OCI-LY7 (cell line): ENCODE measurements at regions of chr11 and their contacts with region 1.

Region 1: GRCh38 chr11:68038718-68039525 is at the start of gene TCIRG1:
- DNase-seq: peak; percentile 77
- H3K4me3 ChIP-seq: peak within 1 kb of the TSS; percentile 79
- H3K27ac ChIP-seq: peak within 1 kb of the TSS; percentile 79
- H3K4me1 ChIP-seq: peaks cover 30% of the 10 kb centered on the region
- CTCF ChIP-seq: no peak
- total RNA-seq, gene TCIRG1: 148 and 199 TPM in 2 replicates

Region 2: GRCh38 chr11:68003846-68004550 is 34.9 kb before region 1 on chr11 and contains the start of gene UNC93B1:
- CTCF ChIA-PET with region 1: no interaction called
- POLR2A ChIA-PET with region 1: no interaction called
- intact Hi-C with region 1: loop called (anchors 1 kb)
- DNase-seq: peak; percentile 90
- H3K4me3 ChIP-seq: peak within 1 kb of the TSS; percentile 82
- H3K27ac ChIP-seq: peak within 1 kb of the TSS; percentile 89
- H3K4me1 ChIP-seq: peaks cover 57% of the 10 kb centered on the region
- CTCF ChIP-seq: no peak
- total RNA-seq, gene UNC93B1: 39.6 and 44.0 TPM in 2 replicates

Region 3: DNA sequence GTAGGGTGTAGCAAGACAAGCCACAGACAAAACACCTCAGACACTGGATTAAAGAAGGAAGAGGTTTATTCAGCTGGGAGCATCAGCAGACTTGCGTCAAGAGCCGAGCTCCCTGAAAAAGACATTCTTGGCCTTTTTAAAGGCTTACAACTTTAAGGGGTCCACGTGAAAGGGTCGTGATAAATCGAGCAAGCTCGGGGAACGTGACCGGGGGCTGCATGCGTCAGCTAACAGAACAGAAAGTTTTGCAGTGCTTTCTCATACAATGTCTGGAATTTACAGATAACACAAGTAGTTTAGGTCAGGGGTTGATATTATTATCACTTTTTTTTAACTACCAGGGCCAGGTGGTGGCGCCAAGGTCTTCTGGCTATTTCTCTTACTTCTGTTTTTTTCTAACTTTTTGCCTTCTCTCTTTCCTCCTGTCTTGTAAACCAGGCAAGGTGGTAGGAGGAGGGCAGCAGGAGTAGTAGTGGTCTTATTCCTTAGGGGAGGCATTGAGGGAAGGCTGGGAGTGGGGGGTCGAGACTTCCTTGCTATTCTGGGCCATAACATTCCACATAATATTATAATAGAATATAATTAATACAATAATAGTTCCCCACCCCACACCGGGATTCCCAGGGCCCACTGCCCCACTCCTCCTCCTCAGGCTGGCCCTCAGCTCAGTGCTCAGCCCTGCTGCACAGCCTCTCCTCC is 29.4 kb before region 1 on chr11:
- CTCF ChIA-PET with region 1: interaction called, 5 read pairs
- POLR2A ChIA-PET with region 1: no interaction called
- intact Hi-C with region 1: loop called (anchors 1 kb)
- DNase-seq: peak; percentile 68
- H3K4me3 ChIP-seq: peak overlapping the region; percentile 18
- H3K27ac ChIP-seq: peak overlapping the region; percentile 52
- H3K4me1 ChIP-seq: peaks cover 48% of the 10 kb centered on the region
- CTCF ChIP-seq: peak; percentile 76